Right ventricle myocardium inferior (tissue), 1 donor: ENCODE measurements at regions of chr5 and their contacts with region 1.

Region 1: GRCh38 chr5:95773335-95774059 is 42.4 kb downstream of the RHOBTB3 start:
- DNase-seq: no peak
- ATAC-seq: no peak

Region 2: GRCh38 chr5:95669540-95669939 is 104.0 kb before region 1 on chr5:
- intact Hi-C with region 1: loop called (anchors 5 kb)
- DNase-seq: peak; percentile 66
- ATAC-seq: peak; percentile 95

Region 3: DNA sequence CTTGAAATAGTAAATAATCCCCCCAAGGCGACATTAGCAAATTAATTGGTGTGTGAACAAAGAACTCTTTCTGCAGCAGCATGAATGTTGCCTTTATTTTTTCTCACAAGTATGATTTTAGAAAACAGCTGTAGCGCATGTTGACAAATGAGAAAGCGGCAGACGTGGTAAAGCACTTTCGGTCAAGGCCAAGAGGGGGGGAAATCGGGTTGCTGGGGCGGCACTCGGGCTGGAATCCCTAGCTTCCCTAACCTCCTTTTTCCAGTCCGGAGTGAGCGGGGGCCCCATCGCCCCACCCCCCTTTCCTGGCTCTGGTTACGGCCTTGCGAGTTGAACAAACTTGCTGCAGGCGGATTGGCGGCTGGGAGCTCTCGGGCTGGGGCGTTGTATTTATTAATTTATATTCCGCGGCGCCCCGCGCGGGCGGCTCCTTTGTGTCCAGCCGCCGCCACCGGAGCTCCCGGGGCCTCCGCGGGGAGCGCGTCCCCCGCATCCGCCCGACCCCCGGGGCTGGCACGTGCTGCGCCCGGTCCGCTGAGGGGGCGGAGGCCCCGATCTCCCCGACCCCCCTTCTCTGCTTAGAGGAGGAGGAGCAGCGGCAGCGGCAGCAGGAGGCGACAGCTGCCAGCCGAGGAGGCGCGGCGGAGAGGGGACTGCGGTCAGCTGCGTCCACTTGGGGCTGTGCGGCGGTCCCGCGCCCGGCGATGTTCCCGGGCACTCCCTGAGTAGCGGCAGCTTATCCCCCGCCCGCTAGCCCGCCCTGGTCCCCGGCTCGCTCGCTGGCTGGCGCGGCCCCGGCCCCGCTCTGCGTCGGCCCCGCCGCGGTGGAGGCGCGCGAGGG is 42.5 kb before region 1 on chr5 and contains the start of gene RHOBTB3:
- intact Hi-C with region 1: loop called (anchors 5 kb)
- DNase-seq: peak; percentile 93
- ATAC-seq: peak; percentile 80
- total RNA-seq, gene RHOBTB3: 76.5 TPM

Region 4: GRCh38 chr5:95794070-95794516 is 20.6 kb after region 1 on chr5:
- intact Hi-C with region 1: no loop called
- DNase-seq: no peak
- ATAC-seq: no peak